ENCODE measurements at regions of chr3 and their contacts with region 1.

Region 1: DNA sequence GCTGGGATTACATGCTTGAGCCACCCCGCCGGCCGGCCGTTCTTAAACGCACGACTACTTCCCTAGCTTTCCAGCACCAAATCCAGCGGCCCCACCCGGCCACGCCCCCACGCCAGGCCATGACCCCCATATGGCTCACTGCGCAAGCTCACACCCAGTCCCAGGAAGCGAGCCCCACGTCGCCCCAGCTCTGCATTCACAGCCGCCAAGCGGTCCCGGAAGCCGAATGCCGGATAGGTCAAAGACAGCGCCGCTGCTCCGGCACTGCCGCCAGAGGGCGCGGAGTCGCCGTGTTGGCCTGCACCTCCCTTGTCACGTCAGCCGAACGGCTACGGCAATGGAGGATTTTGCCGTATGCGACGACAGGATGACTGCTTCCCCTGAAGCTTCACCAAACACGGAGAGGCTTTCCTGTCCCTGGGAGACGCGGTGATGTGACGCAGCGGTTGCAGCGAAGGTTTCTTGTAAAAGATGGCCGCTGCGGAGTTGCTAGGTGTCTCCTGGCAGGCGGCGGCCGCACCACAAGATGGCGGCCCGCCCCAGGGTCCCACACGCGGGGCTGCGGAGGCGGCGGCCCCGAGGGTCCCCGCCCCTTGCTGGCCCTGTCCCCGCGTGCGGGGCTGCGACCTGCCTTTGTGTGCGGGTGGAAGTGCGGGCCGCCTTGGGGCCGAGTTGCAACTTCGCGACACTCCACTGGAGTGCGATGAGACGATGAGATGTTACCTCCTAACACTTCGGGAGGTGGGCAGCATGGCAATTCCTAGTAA is 30.2 kb upstream of the RPN1 start:
- DNase-seq: peak; percentile 94 to 100
- H3K4me3 ChIP-seq: peak overlapping the region; percentile 73
- H3K27ac ChIP-seq: peak overlapping the region; percentile 82
- H3K4me1 ChIP-seq: peaks cover 8% of the 10 kb centered on the region
- H3K27me3 ChIP-seq: no peaks in the 10 kb centered on the region
- CTCF ChIP-seq: peak; percentile 91

Region 2: DNA sequence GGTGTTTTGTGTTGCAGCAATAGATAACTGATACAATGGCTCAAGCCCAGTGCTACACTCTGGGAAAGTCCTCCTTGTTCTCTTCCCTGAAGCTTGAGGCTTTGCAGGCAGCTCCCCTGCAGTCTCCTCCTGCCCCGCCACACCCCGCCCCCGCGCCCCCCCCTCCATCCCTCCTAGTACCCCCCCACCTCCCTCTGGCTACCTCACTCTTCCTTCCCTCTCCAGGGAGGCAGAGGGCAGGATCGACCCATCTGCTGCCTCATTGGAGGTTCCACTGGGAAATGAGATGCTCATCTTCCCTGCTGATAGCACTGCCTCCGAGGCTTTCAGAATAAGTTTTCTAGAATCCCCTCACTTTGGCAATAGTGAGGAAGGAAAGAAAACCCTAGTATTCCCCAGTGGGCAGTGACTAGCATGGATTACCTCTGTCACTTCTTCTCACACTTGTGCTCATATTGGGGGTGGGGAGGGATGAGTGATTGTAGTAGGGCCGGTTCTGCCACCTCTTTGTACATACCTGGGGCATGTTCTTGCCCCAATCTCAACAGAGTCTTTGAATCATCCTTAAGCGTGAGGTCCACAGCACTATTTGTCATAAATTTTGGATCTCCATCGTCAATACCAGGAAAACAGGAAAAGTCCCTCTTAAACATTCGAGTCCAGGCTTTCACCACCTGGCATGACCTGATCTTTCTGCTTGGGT is 28.9 kb after region 1 on chr3:
- CTCF ChIA-PET with region 1: interaction called, 10 read pairs
- POLR2A ChIA-PET with region 1: no interaction called
- intact Hi-C with region 1: no loop called
- DNase-seq: peak; percentile 73 to 89
- H3K4me3 ChIP-seq: peak overlapping the region; percentile 38; the same call in 1 of the 2 replicates
- H3K27ac ChIP-seq: peak overlapping the region; percentile 53
- H3K4me1 ChIP-seq: peaks cover 40% of the 10 kb centered on the region
- H3K27me3 ChIP-seq: no peaks in the 10 kb centered on the region
- CTCF ChIP-seq: no peak

Region 3: GRCh38 chr3:128787256-128788240 is 106.8 kb after region 1 on chr3:
- CTCF ChIA-PET with region 1: interaction called, 14 read pairs
- POLR2A ChIA-PET with region 1: interaction called, 3 read pairs
- intact Hi-C with region 1: loop called (anchors 2 kb)
- DNase-seq: peak; percentile 58 to 70
- H3K4me3 ChIP-seq: no peak overlapping the region
- H3K27ac ChIP-seq: peak overlapping the region; percentile 42
- H3K4me1 ChIP-seq: peaks cover 24% of the 10 kb centered on the region
- H3K27me3 ChIP-seq: no peaks in the 10 kb centered on the region
- CTCF ChIP-seq: peak; percentile 66

Region 4: DNA sequence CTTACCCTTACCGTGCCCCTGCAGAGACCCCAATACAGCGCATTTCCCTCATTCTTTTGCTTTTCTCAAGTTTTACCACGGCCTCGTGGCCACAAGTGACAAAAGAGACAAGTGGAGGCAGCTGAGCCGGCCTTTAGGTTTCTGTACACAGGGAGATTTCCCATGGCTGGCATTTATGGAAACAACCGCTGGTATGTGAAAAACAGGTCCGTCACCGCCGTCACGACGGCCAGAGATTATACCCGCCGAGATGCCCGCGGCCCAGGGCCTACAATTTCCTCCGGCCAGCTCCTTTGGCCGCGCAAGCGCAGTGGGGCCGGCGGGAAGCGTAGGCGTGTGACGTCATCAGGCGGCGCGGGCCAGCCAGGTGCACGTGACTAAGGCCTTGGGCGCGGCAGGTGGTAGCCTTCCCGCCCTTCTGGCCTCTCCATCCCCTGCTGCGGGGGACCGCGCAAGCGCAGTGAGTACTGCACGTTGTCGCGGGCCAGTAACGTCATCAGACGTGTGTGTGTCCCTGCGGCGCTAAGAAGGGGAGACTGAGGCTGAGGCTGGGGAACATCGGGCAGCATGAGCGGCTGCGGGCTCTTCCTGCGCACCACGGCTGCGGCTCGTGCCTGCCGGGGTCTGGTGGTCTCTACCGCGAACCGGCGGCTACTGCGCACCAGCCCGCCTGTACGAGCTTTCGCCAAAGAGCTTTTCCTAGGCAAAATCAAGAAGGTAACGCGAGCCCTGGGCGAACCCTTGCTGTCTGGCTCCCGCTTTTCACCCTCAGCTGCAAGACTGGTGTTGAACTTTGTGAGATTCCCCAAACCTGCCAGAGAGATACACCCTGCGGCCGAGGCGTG is 198.6 kb after region 1 on chr3 and contains the start of gene ACAD9:
- CTCF ChIA-PET with region 1: interaction called, 4 read pairs
- POLR2A ChIA-PET with region 1: interaction called, 7 read pairs
- intact Hi-C with region 1: loop called (anchors 1 kb)
- DNase-seq: peak; percentile 89 to 99
- H3K4me3 ChIP-seq: peak within 1 kb of the TSS; percentile 82
- H3K27ac ChIP-seq: peak within 1 kb of the TSS; percentile 86
- H3K4me1 ChIP-seq: peaks cover 18% of the 10 kb centered on the region
- H3K27me3 ChIP-seq: no peaks in the 10 kb centered on the region
- CTCF ChIP-seq: no peak
- total RNA-seq, gene ACAD9: 76.5 and 81.4 TPM in 2 replicates